PC-9 (cell line): ENCODE measurements at regions of chr4 and their contacts with region 1.

Region 1: DNA sequence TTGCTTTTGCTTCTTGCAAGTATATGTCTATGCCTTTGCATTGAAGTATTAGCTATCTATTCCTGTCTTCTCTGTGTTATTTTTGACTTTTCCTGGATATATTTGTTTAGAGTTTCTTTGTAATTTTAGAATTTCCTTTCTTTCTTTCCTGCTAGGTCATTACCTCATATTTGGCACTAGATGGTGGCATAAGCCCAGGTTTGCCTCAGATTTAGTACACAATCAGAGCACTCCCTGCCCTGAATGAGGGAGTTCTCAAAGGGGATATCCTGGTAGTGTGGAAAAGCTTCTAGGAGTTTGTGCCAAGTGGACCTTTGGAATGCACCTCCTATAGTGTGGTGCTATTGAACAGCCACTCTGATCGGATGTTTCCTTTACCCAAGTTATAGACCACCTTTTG is 181.6 kb downstream of the UGT8 start:
- DNase-seq: peak in 1 of 2 experiments; percentile 3
- H3K4me3 ChIP-seq: no peak overlapping the region
- H3K27ac ChIP-seq: no peak overlapping the region
- H3K4me1 ChIP-seq: no peaks in the 10 kb centered on the region
- H3K27me3 ChIP-seq: no peaks in the 10 kb centered on the region
- CTCF ChIP-seq: peak; percentile 52

Region 2: GRCh38 chr4:114615436-114615885 is 164.7 kb before region 1 on chr4:
- CTCF ChIA-PET with region 1: no interaction called
- POLR2A ChIA-PET with region 1: no interaction called
- intact Hi-C with region 1: no loop called
- DNase-seq: no peak
- H3K4me3 ChIP-seq: no peak overlapping the region
- H3K27ac ChIP-seq: no peak overlapping the region
- H3K4me1 ChIP-seq: no peaks in the 10 kb centered on the region
- H3K27me3 ChIP-seq: no peaks in the 10 kb centered on the region
- CTCF ChIP-seq: no peak

Region 3: DNA sequence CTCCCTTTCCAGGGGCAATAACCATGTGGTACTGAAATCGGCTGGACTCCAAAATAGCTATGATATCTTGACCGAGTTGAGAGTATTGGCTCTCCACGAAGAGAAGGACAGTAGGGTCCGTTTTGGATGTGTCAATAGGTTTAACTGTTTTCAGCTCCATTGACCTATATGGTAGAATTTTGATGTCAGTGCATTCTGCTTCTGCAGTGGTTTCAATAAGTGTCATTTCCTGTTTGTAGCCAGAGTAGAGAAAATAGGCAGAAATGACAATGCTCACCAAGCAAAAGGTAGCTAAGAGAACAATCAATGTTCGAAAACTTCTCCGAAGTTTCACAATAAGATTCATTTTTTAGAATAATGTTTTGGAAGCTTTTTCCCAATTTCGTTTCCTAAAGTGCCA is 296.5 kb after region 1 on chr4:
- CTCF ChIA-PET with region 1: no interaction called
- POLR2A ChIA-PET with region 1: no interaction called
- intact Hi-C with region 1: loop called (anchors 10 kb)
- DNase-seq: no peak
- H3K4me3 ChIP-seq: no peak overlapping the region
- H3K27ac ChIP-seq: no peak overlapping the region
- H3K4me1 ChIP-seq: no peaks in the 10 kb centered on the region
- H3K27me3 ChIP-seq: no peaks in the 10 kb centered on the region
- CTCF ChIP-seq: no peak

Region 4: GRCh38 chr4:115537387-115537786 is 757.2 kb after region 1 on chr4:
- CTCF ChIA-PET with region 1: no interaction called
- POLR2A ChIA-PET with region 1: no interaction called
- intact Hi-C with region 1: loop called (anchors 5 kb)
- DNase-seq: no peak
- H3K4me3 ChIP-seq: no peak overlapping the region
- H3K27ac ChIP-seq: no peak overlapping the region
- H3K4me1 ChIP-seq: no peaks in the 10 kb centered on the region
- H3K27me3 ChIP-seq: no peaks in the 10 kb centered on the region
- CTCF ChIP-seq: peak; percentile 38